CD8-positive, alpha-beta memory T cell (primary cell): ENCODE measurements at regions of chr11 and their contacts with region 1.

Region 1: DNA sequence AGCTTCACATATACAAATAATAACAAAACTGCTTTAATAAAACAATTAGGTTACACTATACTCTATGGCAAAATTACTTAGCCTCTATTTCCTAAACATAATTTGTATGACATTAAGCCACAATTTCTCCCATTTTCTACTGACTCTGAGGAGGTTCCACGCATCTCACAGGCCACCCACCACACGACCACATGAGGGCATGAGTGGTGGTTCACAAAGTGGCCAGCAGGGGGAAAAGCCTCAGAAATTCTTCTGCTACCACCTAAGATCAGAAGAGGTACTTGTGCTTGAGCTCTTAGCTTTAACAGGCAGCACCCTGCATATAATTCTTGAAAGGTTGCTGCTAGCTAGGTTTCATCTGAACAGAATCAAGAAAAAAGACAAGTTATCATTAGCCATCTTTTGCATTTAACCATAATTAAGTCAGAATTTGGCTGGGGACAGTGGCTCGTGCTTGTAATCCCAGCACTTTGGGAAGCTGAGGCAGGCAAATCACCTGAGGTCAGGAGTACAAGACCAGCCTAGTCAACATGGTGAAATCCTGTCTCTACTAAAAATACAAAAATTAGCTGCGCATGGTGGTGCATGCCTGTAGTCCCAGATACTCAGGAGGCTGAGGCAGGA is 7.7 kb downstream of the LPXN start:
- DNase-seq: peak; percentile 62 to 83 (median 71)
- H3K4me3 ChIP-seq: no peak overlapping the region
- H3K4me3 Mint-ChIP-seq: peak overlapping the region; percentile 10 to 78 (median 43)
- H3K27ac ChIP-seq: no peak overlapping the region
- H3K27ac Mint-ChIP-seq: peak overlapping the region; percentile 28 to 95 (median 80)
- H3K4me1 ChIP-seq: peaks cover 51% of the 10 kb centered on the region
- H3K4me1 Mint-ChIP-seq: peaks cover 59 to 80% (median 79%) of the 10 kb centered on the region in 3 donors
- H3K27me3 ChIP-seq: no peaks in the 10 kb centered on the region
- H3K27me3 Mint-ChIP-seq: no peaks in the 10 kb centered on the region

Region 2: GRCh38 chr11:58406774-58407173 is 161.2 kb before region 1 on chr11 and contains the start of gene OR5B3:
- CTCF ChIA-PET with region 1: no interaction called
- POLR2A ChIA-PET with region 1: no interaction called
- DNase-seq: no peak
- H3K4me3 ChIP-seq: no peak within 1 kb of the TSS
- H3K4me3 Mint-ChIP-seq: no peak within 1 kb of the TSS
- H3K27ac ChIP-seq: no peak within 1 kb of the TSS
- H3K27ac Mint-ChIP-seq: no peak within 1 kb of the TSS
- H3K4me1 ChIP-seq: no peaks in the 10 kb centered on the region
- H3K4me1 Mint-ChIP-seq: no peaks in the 10 kb centered on the region
- H3K27me3 ChIP-seq: no peaks in the 10 kb centered on the region
- H3K27me3 Mint-ChIP-seq: peaks cover 10 to 15% of the 10 kb centered on the region in 2 donors
- total RNA-seq, gene OR5B3: not detected

Region 3: DNA sequence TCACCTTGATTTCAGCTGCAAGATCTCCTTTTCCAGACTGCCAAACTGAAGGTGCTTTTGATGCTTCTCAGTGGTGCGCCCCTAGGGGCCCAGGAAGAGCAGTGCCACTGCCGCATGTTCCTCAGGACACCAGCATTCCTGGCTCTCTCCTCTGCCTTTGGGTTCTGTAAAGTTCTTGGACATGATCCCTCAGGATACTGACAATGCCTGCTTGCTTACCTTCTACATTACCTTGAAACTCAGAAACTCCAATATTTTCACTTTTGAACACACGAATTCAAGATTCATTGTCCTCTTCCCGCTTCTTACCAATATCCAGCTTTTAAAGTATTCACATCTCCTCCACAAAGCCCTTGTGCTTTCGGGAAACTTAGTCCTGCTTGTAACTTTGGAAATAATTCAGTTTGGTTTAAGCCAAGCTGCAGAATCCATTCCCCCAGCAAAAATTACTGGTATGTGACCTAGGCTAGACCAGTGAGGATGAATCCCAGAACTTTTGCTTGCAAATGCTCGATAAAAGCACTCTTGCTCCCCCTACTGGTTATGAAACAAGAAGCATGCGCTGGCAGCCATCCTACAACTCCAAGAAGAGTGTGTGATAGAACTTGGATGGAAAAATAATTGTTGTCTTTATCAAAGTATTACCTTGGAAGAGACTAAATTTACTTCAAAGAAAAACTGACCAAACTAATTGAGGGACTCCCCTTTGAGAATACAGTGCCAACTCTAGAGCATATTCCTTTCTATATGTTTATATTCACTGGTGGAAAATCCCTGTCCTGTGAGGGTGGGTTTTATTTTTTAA is 43.6 kb before region 1 on chr11:
- CTCF ChIA-PET with region 1: interaction called, 18 read pairs
- POLR2A ChIA-PET with region 1: no interaction called
- DNase-seq: peak; percentile 10 to 73 (median 53)
- H3K4me3 ChIP-seq: peak overlapping the region; percentile 41
- H3K4me3 Mint-ChIP-seq: peak overlapping the region; percentile 9 to 81 (median 69)
- H3K27ac ChIP-seq: peak overlapping the region; percentile 69
- H3K27ac Mint-ChIP-seq: peak overlapping the region; percentile 85 to 97 (median 94)
- H3K4me1 ChIP-seq: peaks cover 52% of the 10 kb centered on the region
- H3K4me1 Mint-ChIP-seq: peaks cover 33 to 63% (median 61%) of the 10 kb centered on the region in 3 donors
- H3K27me3 ChIP-seq: no peaks in the 10 kb centered on the region
- H3K27me3 Mint-ChIP-seq: no peaks in the 10 kb centered on the region

Region 4: GRCh38 chr11:58579192-58580129 is 11.5 kb after region 1 on chr11:
- CTCF ChIA-PET with region 1: interaction called, 73 read pairs
- POLR2A ChIA-PET with region 1: interaction called, 24 read pairs
- DNase-seq: peak; percentile 87 to 96 (median 91)
- H3K4me3 ChIP-seq: peak overlapping the region; percentile 74
- H3K4me3 Mint-ChIP-seq: peak overlapping the region; percentile 88 to 99 (median 98)
- H3K27ac ChIP-seq: peak overlapping the region; percentile 92
- H3K27ac Mint-ChIP-seq: peak overlapping the region; percentile 99 to 100 (median 100)
- H3K4me1 ChIP-seq: peaks cover 60% of the 10 kb centered on the region
- H3K4me1 Mint-ChIP-seq: peaks cover 68 to 81% (median 78%) of the 10 kb centered on the region in 3 donors
- H3K27me3 ChIP-seq: no peaks in the 10 kb centered on the region
- H3K27me3 Mint-ChIP-seq: peaks cover 0 to 16% of the 10 kb centered on the region in 2 donors

Region 5: GRCh38 chr11:58622344-58622743 is 54.3 kb after region 1 on chr11 and contains the start of gene CNTF:
- CTCF ChIA-PET with region 1: interaction called, 13 read pairs
- POLR2A ChIA-PET with region 1: no interaction called
- DNase-seq: no peak
- H3K4me3 ChIP-seq: no peak within 1 kb of the TSS
- H3K4me3 Mint-ChIP-seq: no peak within 1 kb of the TSS
- H3K27ac ChIP-seq: no peak within 1 kb of the TSS
- H3K27ac Mint-ChIP-seq: peak within 1 kb of the TSS in 6 of 8 donors; percentile 13 to 75 (median 47)
- H3K4me1 ChIP-seq: no peaks in the 10 kb centered on the region
- H3K4me1 Mint-ChIP-seq: no peaks in the 10 kb centered on the region
- H3K27me3 ChIP-seq: no peaks in the 10 kb centered on the region
- H3K27me3 Mint-ChIP-seq: no peaks in the 10 kb centered on the region
- total RNA-seq, gene CNTF: 2.9 to 3.4 TPM

Region 6: GRCh38 chr11:58640386-58641023 is 72.5 kb after region 1 on chr11:
- CTCF ChIA-PET with region 1: interaction called, 10 read pairs
- POLR2A ChIA-PET with region 1: no interaction called
- DNase-seq: peak in 2 of 5 donors; percentile 18
- H3K4me3 ChIP-seq: no peak overlapping the region
- H3K4me3 Mint-ChIP-seq: peak overlapping the region in 6 of 7 donors; percentile 27 to 49 (median 36)
- H3K27ac ChIP-seq: no peak overlapping the region
- H3K27ac Mint-ChIP-seq: peak overlapping the region in 7 of 8 donors; percentile 13 to 80 (median 74)
- H3K4me1 ChIP-seq: peaks cover 19% of the 10 kb centered on the region
- H3K4me1 Mint-ChIP-seq: peaks cover 19 to 23% (median 22%) of the 10 kb centered on the region in 3 donors
- H3K27me3 ChIP-seq: no peaks in the 10 kb centered on the region
- H3K27me3 Mint-ChIP-seq: no peaks in the 10 kb centered on the region

Region 7: GRCh38 chr11:58762284-58763119 is 194.5 kb after region 1 on chr11:
- CTCF ChIA-PET with region 1: no interaction called
- POLR2A ChIA-PET with region 1: no interaction called
- DNase-seq: no peak
- H3K4me3 ChIP-seq: no peak overlapping the region
- H3K4me3 Mint-ChIP-seq: no peak overlapping the region
- H3K27ac ChIP-seq: no peak overlapping the region
- H3K27ac Mint-ChIP-seq: no peak overlapping the region
- H3K4me1 ChIP-seq: no peaks in the 10 kb centered on the region
- H3K4me1 Mint-ChIP-seq: no peaks in the 10 kb centered on the region
- H3K27me3 ChIP-seq: no peaks in the 10 kb centered on the region
- H3K27me3 Mint-ChIP-seq: peaks cover 9 to 22% of the 10 kb centered on the region in 2 donors